SK-N-SH (cell line): ENCODE measurements at regions of chr11 and their contacts with region 1.

Region 1: DNA sequence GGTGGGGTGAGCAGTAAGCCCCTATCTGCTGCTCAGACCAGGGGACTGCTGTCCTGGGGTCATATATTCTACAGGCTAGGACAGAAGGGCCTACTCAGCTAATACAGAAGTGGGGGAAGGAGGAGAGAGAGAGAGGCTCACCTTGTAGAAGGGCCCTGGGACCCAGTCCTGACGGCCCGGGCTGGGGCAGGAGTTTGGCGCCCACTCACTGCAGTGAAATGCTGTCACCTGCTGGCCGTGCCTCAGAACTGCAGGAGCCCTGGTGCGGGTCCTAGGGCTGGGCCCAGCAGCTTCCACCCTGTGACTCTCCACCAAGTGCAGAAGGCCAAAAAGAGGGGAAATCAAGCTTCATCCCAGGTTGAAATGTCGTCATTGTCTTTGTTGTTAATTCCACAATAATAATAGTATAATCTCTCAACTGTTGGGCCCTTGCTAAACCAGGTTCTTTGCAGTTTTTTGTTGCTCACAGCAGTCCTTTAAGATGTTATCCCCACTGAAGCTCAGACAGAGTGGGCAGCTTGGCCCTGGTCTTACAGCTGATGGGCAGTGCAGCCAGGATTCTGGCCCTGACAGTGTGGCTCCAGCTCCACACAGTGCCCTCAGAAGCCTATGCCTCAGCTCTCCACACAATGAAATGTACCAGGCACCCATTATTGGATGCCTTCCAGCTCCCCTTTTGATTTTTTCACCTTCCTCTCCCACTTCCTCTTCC is 29.6 kb downstream of the TRIM29 start:
- DNase-seq: peak; percentile 95
- H3K4me3 ChIP-seq: peak overlapping the region in 1 of 2 experiments; percentile 24; a peak in 1 of 4 replicates
- H3K27ac ChIP-seq: peak overlapping the region in 1 of 2 experiments; percentile 56; a peak in 2 of 4 replicates
- H3K4me1 ChIP-seq: peaks cover 0 to 43% of the 10 kb centered on the region in 2 experiments; a peak in 1 of 4 replicates
- H3K27me3 ChIP-seq: peaks cover 17% of the 10 kb centered on the region; the same call in 1 of the 2 replicates
- CTCF ChIP-seq: peak; percentile 98
- EP300 ChIP-seq: no peak
- RAD21 ChIP-seq: peak; percentile 99

Region 2: GRCh38 chr11:119666463-119667131 is 441.7 kb before region 1 on chr11:
- CTCF ChIA-PET with region 1: interaction called, 76 read pairs
- POLR2A ChIA-PET with region 1: no interaction called
- DNase-seq: peak; percentile 92
- H3K4me3 ChIP-seq: no peak overlapping the region; a peak in 1 of 4 replicates
- H3K27ac ChIP-seq: peak overlapping the region in 1 of 2 experiments; percentile 25; a peak in 1 of 4 replicates
- H3K4me1 ChIP-seq: peaks cover 0 to 15% of the 10 kb centered on the region in 2 experiments; a peak in 1 of 4 replicates
- H3K27me3 ChIP-seq: no peaks in the 10 kb centered on the region
- CTCF ChIP-seq: peak; percentile 88
- EP300 ChIP-seq: no peak
- RAD21 ChIP-seq: peak; percentile 98

Region 3: GRCh38 chr11:119721129-119722120 is 386.9 kb before region 1 on chr11:
- CTCF ChIA-PET with region 1: interaction called, 129 read pairs
- POLR2A ChIA-PET with region 1: no interaction called
- DNase-seq: peak; percentile 75
- H3K4me3 ChIP-seq: no peak overlapping the region
- H3K27ac ChIP-seq: peak overlapping the region in 1 of 2 experiments; percentile 78; a peak in 2 of 4 replicates
- H3K4me1 ChIP-seq: peaks cover 9 to 91% of the 10 kb centered on the region in 2 experiments; a peak in 2 of 4 replicates
- H3K27me3 ChIP-seq: no peaks in the 10 kb centered on the region
- CTCF ChIP-seq: peak; percentile 47
- EP300 ChIP-seq: 0 out of 4 replicates have a peak, but pooled peaks of 1 of the 2 experiments have one; percentile 35
- RAD21 ChIP-seq: peak; percentile 32

Region 4: GRCh38 chr11:119782006-119782738 is 326.1 kb before region 1 on chr11:
- CTCF ChIA-PET with region 1: interaction called, 10 read pairs
- POLR2A ChIA-PET with region 1: interaction called, 9 read pairs
- DNase-seq: no peak
- H3K4me3 ChIP-seq: no peak overlapping the region
- H3K27ac ChIP-seq: peak overlapping the region in 1 of 2 experiments; percentile 77; a peak in 2 of 4 replicates
- H3K4me1 ChIP-seq: peaks cover 0 to 64% of the 10 kb centered on the region in 2 experiments; a peak in 2 of 4 replicates
- H3K27me3 ChIP-seq: no peaks in the 10 kb centered on the region; the same call in none of the 2 replicates
- CTCF ChIP-seq: no peak
- EP300 ChIP-seq: no peak
- RAD21 ChIP-seq: no peak

Region 5: GRCh38 chr11:120007144-120007543 is 101.2 kb before region 1 on chr11:
- CTCF ChIA-PET with region 1: interaction called, 73 read pairs
- POLR2A ChIA-PET with region 1: no interaction called
- DNase-seq: no peak
- H3K4me3 ChIP-seq: no peak overlapping the region
- H3K27ac ChIP-seq: no peak overlapping the region
- H3K4me1 ChIP-seq: peaks cover 0 to 5% of the 10 kb centered on the region in 2 experiments; a peak in 1 of 4 replicates
- H3K27me3 ChIP-seq: no peaks in the 10 kb centered on the region
- CTCF ChIP-seq: no peak
- EP300 ChIP-seq: no peak
- RAD21 ChIP-seq: no peak

Region 6: GRCh38 chr11:120137611-120138521 is 29.6 kb after region 1 on chr11 and contains the start of gene TRIM29:
- CTCF ChIA-PET with region 1: interaction called, 18 read pairs
- POLR2A ChIA-PET with region 1: no interaction called
- DNase-seq: peak; percentile 35
- H3K4me3 ChIP-seq: no peak within 1 kb of the TSS
- H3K27ac ChIP-seq: no peak within 1 kb of the TSS
- H3K4me1 ChIP-seq: peaks cover 0 to 26% of the 10 kb centered on the region in 2 experiments; a peak in 1 of 4 replicates
- H3K27me3 ChIP-seq: peaks cover 1% of the 10 kb centered on the region; the same call in 1 of the 2 replicates
- CTCF ChIP-seq: no peak
- EP300 ChIP-seq: no peak
- RAD21 ChIP-seq: no peak
- polyA plus RNA-seq, gene TRIM29: 0.03 TPM in 1 of 2 replicates, not detected in the other

Region 7: GRCh38 chr11:120198787-120199469 is 90.6 kb after region 1 on chr11:
- CTCF ChIA-PET with region 1: no interaction called
- POLR2A ChIA-PET with region 1: no interaction called
- DNase-seq: no peak
- H3K4me3 ChIP-seq: no peak overlapping the region
- H3K27ac ChIP-seq: no peak overlapping the region
- H3K4me1 ChIP-seq: peaks cover 0 to 10% of the 10 kb centered on the region in 2 experiments; a peak in 1 of 4 replicates
- H3K27me3 ChIP-seq: peaks cover 7% of the 10 kb centered on the region; the same call in 1 of the 2 replicates
- CTCF ChIP-seq: no peak
- EP300 ChIP-seq: no peak
- RAD21 ChIP-seq: no peak

Region 8: DNA sequence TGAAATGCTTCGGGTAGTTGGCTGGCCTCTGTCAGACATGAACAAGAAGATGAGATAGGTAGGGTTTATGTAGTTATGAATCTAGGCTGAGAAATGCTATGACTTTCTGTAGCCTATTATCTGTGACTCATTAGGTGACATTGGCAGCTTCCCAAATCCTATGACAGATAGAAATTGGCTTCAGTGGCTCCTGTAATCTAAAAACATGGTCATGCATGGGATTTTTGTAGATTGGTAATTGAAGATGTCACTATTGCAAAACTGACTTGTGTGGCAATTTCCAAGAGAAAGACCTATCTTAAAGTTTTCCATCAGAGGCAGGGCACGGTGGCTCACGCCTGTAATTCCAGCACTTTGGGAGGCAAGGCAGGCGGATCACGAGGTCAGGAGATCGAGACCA is 373.8 kb after region 1 on chr11:
- CTCF ChIA-PET with region 1: no interaction called
- POLR2A ChIA-PET with region 1: no interaction called
- DNase-seq: no peak
- H3K4me3 ChIP-seq: no peak overlapping the region
- H3K27ac ChIP-seq: no peak overlapping the region
- H3K4me1 ChIP-seq: no peaks in the 10 kb centered on the region
- H3K27me3 ChIP-seq: no peaks in the 10 kb centered on the region
- CTCF ChIP-seq: no peak
- EP300 ChIP-seq: no peak
- RAD21 ChIP-seq: no peak

Region 9: GRCh38 chr11:120590472-120590871 is 482.2 kb after region 1 on chr11:
- CTCF ChIA-PET with region 1: no interaction called
- POLR2A ChIA-PET with region 1: no interaction called
- DNase-seq: no peak
- H3K4me3 ChIP-seq: no peak overlapping the region
- H3K27ac ChIP-seq: no peak overlapping the region
- H3K4me1 ChIP-seq: no peaks in the 10 kb centered on the region
- H3K27me3 ChIP-seq: peaks cover 5% of the 10 kb centered on the region; the same call in 1 of the 2 replicates
- CTCF ChIP-seq: no peak
- EP300 ChIP-seq: no peak
- RAD21 ChIP-seq: no peak